ENCODE measurements at regions of chr3 and their contacts with region 1.

Region 1: GRCh38 chr3:186930641-186931531 is 560 bp downstream of the ST6GAL1 start:
- DNase-seq: peak; percentile 74 to 84 (median 78)
- H3K4me3 ChIP-seq: peak overlapping the region; percentile 85 to 92
- H3K4me3 Mint-ChIP-seq: peak overlapping the region; percentile 91 to 100 (median 99)
- H3K27ac ChIP-seq: peak overlapping the region; percentile 81
- H3K27ac Mint-ChIP-seq: peak overlapping the region; percentile 90 to 98 (median 96)
- H3K4me1 ChIP-seq: peaks cover 37% of the 10 kb centered on the region
- H3K4me1 Mint-ChIP-seq: peaks cover 22 to 58% (median 39%) of the 10 kb centered on the region in 4 donors
- H3K27me3 ChIP-seq: no peaks in the 10 kb centered on the region
- H3K27me3 Mint-ChIP-seq: no peaks in the 10 kb centered on the region

Region 2: DNA sequence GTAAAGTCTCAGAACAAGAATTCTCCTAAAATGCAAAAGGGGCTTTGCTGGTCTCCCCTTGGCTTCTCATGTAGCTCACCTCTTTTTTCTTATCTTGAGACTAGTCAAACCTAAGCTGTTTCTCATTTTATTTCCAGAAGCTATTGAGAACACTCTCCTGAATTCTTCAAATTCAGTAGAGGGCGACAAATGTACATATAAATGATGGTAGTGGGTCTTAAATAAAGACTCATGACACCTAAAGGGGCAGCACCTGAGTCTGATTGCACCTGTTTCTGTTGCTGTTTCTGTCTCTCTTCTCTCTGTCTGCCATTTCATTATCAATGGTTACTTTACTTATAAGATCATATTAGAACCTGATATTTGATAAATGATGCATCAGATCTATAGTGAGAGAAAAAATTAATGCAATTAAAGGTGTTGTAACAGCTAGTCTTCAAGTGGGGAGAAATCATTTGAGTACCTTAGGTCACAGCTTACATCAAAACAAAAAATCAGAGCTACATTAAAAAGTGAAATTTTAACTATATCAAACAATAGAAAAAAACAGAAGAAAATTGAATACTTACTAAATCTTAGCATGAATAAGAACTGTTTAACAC is 81.4 kb before region 1 on chr3:
- CTCF ChIA-PET with region 1: interaction called, 184 read pairs
- POLR2A ChIA-PET with region 1: interaction called, 104 read pairs
- intact Hi-C with region 1: loop called (anchors 1 kb)
- DNase-seq: peak in 4 of 5 donors; percentile 63 to 70 (median 66)
- H3K4me3 ChIP-seq: no peak overlapping the region
- H3K4me3 Mint-ChIP-seq: no peak overlapping the region
- H3K27ac ChIP-seq: no peak overlapping the region
- H3K27ac Mint-ChIP-seq: peak overlapping the region in 5 of 7 donors; percentile 1 to 84 (median 67)
- H3K4me1 ChIP-seq: peaks cover 9% of the 10 kb centered on the region
- H3K4me1 Mint-ChIP-seq: peaks cover 8 to 19% (median 14%) of the 10 kb centered on the region in 4 donors
- H3K27me3 ChIP-seq: peaks cover 4% of the 10 kb centered on the region
- H3K27me3 Mint-ChIP-seq: peaks cover 3 to 9% of the 10 kb centered on the region in 2 donors

Region 3: DNA sequence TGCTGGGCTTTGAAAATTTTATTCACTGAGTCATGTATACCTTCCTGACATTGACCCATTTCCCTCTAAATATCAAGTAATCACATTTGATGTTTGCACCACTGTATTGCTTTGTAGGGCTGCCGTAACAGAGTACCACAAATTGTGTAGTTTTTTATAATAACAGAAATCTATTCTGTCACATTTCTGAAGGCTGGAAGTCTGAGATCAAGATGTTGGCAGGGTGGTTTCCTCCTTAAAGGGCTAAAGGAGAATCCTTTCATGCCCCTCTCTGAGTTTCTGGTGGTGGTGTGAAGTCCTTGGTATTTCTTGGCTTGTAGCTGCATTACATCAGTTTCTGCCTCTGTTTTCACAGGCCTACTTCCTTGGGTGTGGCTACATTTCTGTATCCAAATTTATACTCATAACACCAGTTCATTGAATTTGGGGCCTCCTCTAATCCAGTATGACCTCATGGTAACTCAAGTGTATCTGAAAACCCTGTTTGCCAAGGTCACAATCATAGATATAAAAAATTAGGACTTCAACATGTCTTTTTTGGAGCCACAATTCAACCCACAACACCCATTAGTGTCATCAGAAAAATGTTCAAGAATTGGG is 29.7 kb before region 1 on chr3:
- CTCF ChIA-PET with region 1: interaction called, 3 read pairs
- POLR2A ChIA-PET with region 1: interaction called, 28 read pairs
- intact Hi-C with region 1: loop called (anchors 2 kb)
- DNase-seq: peak in 2 of 5 donors; percentile 16 to 20
- H3K4me3 ChIP-seq: no peak overlapping the region
- H3K4me3 Mint-ChIP-seq: peak overlapping the region in 6 of 8 donors; percentile 11 to 63 (median 40)
- H3K27ac ChIP-seq: no peak overlapping the region
- H3K27ac Mint-ChIP-seq: peak overlapping the region; percentile 39 to 91 (median 79)
- H3K4me1 ChIP-seq: peaks cover 14% of the 10 kb centered on the region
- H3K4me1 Mint-ChIP-seq: peaks cover 18 to 28% (median 24%) of the 10 kb centered on the region in 4 donors
- H3K27me3 ChIP-seq: no peaks in the 10 kb centered on the region
- H3K27me3 Mint-ChIP-seq: no peaks in the 10 kb centered on the region

Region 4: DNA sequence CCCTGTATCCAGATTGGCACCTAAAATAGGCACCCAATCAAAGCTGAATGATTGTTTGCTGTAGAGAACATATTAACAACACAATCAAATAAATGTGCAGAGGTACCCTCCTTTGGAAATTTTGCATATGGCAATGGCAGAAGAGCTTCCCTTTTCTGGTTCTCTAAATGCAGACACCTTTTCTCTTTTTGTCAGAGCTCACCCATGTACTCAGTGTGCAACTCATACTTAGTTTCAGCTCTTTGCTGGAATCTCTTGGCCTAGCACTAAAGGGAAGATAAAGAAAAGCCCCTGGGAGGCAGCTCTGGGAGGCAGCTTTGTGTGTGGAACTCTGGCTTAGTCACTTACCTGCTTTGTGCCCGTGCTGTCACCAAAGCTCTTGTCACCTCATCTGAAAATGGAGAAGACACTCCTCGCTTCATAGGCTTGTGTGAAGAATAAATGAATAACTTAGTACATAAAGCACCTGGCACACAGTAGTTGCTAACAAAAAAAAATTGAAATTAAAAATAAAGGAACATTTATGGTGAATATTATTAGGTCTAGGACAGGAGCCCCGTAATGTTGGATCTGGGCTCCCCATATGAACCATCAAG is 28.2 kb after region 1 on chr3:
- CTCF ChIA-PET with region 1: interaction called, 6 read pairs
- POLR2A ChIA-PET with region 1: interaction called, 19 read pairs
- intact Hi-C with region 1: no loop called
- DNase-seq: no peak
- H3K4me3 ChIP-seq: no peak overlapping the region
- H3K4me3 Mint-ChIP-seq: peak overlapping the region in 2 of 8 donors; percentile 5 to 28
- H3K27ac ChIP-seq: no peak overlapping the region
- H3K27ac Mint-ChIP-seq: peak overlapping the region; percentile 8 to 84 (median 75)
- H3K4me1 ChIP-seq: peaks cover 57% of the 10 kb centered on the region
- H3K4me1 Mint-ChIP-seq: peaks cover 50 to 78% (median 64%) of the 10 kb centered on the region in 4 donors
- H3K27me3 ChIP-seq: no peaks in the 10 kb centered on the region
- H3K27me3 Mint-ChIP-seq: no peaks in the 10 kb centered on the region

Region 5: GRCh38 chr3:187041362-187042307 is 110.7 kb after region 1 on chr3:
- CTCF ChIA-PET with region 1: interaction called, 5 read pairs
- POLR2A ChIA-PET with region 1: interaction called, 10 read pairs
- intact Hi-C with region 1: loop called (anchors 5 kb)
- DNase-seq: peak; percentile 55 to 87 (median 65)
- H3K4me3 ChIP-seq: peak overlapping the region in 1 of 2 donors; percentile 17
- H3K4me3 Mint-ChIP-seq: peak overlapping the region; percentile 60 to 82 (median 72)
- H3K27ac ChIP-seq: peak overlapping the region; percentile 59
- H3K27ac Mint-ChIP-seq: peak overlapping the region; percentile 90 to 97 (median 94)
- H3K4me1 ChIP-seq: peaks cover 87% of the 10 kb centered on the region
- H3K4me1 Mint-ChIP-seq: peaks cover 65 to 85% (median 79%) of the 10 kb centered on the region in 4 donors
- H3K27me3 ChIP-seq: no peaks in the 10 kb centered on the region
- H3K27me3 Mint-ChIP-seq: no peaks in the 10 kb centered on the region

Region 6: GRCh38 chr3:187139126-187139894 is 208.4 kb after region 1 on chr3 and contains the start of gene RPL39L:
- CTCF ChIA-PET with region 1: interaction called, 3 read pairs
- POLR2A ChIA-PET with region 1: interaction called, 25 read pairs
- intact Hi-C with region 1: loop called (anchors 1 kb)
- DNase-seq: peak; percentile 91 to 93 (median 92)
- H3K4me3 ChIP-seq: peak within 1 kb of the TSS; percentile 24 to 86
- H3K4me3 Mint-ChIP-seq: peak within 1 kb of the TSS; percentile 82 to 94 (median 91)
- H3K27ac ChIP-seq: peak within 1 kb of the TSS; percentile 74
- H3K27ac Mint-ChIP-seq: peak within 1 kb of the TSS; percentile 87 to 97 (median 95)
- H3K4me1 ChIP-seq: peaks cover 17% of the 10 kb centered on the region
- H3K4me1 Mint-ChIP-seq: peaks cover 9 to 34% (median 18%) of the 10 kb centered on the region in 4 donors
- H3K27me3 ChIP-seq: no peaks in the 10 kb centered on the region
- H3K27me3 Mint-ChIP-seq: no peaks in the 10 kb centered on the region
- total RNA-seq, gene RPL39L: 2.6 to 3.6 TPM